Activated B cell treated with CpG ODN at 0.5 μM for 24 hours (primary cell): ENCODE measurements at regions of chr9 and their contacts with region 1.

Region 1: GRCh38 chr9:126558051-126558665 is 55.6 kb upstream of the LMX1B start:
- DNase-seq: peak; percentile 53
- ATAC-seq: peak; percentile 85
- H3K4me3 Mint-ChIP-seq: no peak overlapping the region
- H3K27ac Mint-ChIP-seq: peak overlapping the region; percentile 62
- H3K4me1 Mint-ChIP-seq: no peaks in the 10 kb centered on the region
- H3K27me3 Mint-ChIP-seq: peaks cover 31% of the 10 kb centered on the region
- CTCF ChIP-seq: no peak

Region 2: DNA sequence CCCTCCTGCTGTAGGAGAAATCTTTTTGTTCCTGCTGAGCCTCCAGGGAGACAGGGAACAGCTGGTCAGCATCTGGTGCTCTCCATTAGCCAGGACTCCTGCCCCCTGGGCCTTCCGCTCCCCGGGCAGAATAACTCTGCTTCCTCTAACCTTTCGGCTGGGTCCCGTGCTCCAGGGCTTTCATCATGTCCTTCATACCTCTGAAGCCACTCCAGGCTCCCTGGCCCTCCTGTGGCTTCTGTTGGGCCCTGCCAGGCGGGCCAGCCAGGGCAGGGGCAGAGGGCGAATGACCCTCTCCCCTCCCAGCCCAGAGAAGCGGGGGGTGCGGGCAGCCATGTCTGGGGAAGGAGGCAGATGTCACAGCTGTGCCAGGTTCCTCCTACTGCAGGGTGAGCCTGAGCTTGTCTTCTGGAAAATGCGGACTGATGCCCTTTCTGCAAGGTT is 26.1 kb before region 1 on chr9:
- CTCF ChIA-PET with region 1: interaction called, 17 read pairs
- POLR2A ChIA-PET with region 1: interaction called, 7 read pairs
- intact Hi-C with region 1: no loop called
- DNase-seq: no peak
- ATAC-seq: no peak
- H3K4me3 Mint-ChIP-seq: no peak overlapping the region
- H3K27ac Mint-ChIP-seq: peak overlapping the region; percentile 85
- H3K4me1 Mint-ChIP-seq: peaks cover 49% of the 10 kb centered on the region
- H3K27me3 Mint-ChIP-seq: no peaks in the 10 kb centered on the region
- CTCF ChIP-seq: no peak